GM12878 (cell line): ENCODE measurements at regions of chr11 and their contacts with region 1.

Region 1: GRCh38 chr11:2428322-2428795 is 16.0 kb downstream of the TRPM5 start:
- DNase-seq: no peak
- ATAC-seq: peak; percentile 92
- H3K4me3 ChIP-seq: no peak overlapping the region
- H3K27ac ChIP-seq: no peak overlapping the region
- H3K4me1 ChIP-seq: no peaks in the 10 kb centered on the region
- H3K27me3 ChIP-seq: no peaks in the 10 kb centered on the region
- CTCF ChIP-seq: peak; percentile 81 to 92 (median 87)
- EP300 ChIP-seq: no peak
- POLR2A ChIP-seq: no peak
- RAD21 ChIP-seq: peak; percentile 98

Region 2: DNA sequence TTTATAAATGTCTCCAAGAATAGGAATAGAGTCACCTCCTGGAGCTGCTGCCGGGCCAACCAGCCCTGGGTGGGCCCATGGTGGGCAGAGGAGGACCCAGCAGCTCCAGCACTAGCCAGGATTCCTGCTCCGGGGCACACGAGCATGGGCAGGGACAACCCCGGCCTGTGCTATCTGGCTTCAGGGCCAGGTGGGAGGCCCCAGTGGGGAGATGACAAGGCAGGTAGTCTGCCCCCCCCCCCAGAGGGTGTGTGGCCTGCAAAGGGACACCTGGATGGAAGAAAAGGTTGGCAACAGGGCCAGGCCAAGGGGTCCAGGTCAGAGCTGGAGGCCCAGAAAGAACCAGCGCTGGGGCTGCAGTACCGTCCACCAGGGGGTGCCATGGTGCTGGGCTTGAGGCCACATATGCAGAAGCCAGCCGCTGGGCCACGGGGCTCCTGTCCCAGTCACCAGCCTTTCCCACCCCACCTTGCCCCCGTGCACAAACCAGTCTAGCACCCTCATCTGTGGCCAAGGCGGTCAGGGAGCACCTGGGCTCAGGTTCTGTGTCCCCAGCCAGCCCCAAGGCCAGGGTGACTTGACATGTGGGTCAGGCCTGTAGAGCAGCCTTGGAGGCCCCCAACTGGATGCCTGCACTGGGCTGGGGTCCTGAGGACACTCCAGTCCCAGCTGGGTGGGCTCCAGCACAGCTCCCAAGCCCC is 123.1 kb before region 1 on chr11:
- CTCF ChIA-PET with region 1: interaction called, 271 read pairs
- POLR2A ChIA-PET with region 1: no interaction called
- RAD21 ChIA-PET with region 1: interaction called, 187 read pairs
- SMC1A ChIA-PET with region 1: no interaction called
- in situ Hi-C with region 1: no loop called
- intact Hi-C with region 1: no loop called
- DNase-seq: peak; percentile 4
- ATAC-seq: peak; percentile 92
- H3K4me3 ChIP-seq: no peak overlapping the region
- H3K27ac ChIP-seq: no peak overlapping the region
- H3K4me1 ChIP-seq: no peaks in the 10 kb centered on the region
- H3K27me3 ChIP-seq: no peaks in the 10 kb centered on the region; a peak in 1 of 4 replicates
- CTCF ChIP-seq: peak; percentile 76 to 93 (median 84)
- EP300 ChIP-seq: no peak
- POLR2A ChIP-seq: no peak
- RAD21 ChIP-seq: peak; percentile 87

Region 3: DNA sequence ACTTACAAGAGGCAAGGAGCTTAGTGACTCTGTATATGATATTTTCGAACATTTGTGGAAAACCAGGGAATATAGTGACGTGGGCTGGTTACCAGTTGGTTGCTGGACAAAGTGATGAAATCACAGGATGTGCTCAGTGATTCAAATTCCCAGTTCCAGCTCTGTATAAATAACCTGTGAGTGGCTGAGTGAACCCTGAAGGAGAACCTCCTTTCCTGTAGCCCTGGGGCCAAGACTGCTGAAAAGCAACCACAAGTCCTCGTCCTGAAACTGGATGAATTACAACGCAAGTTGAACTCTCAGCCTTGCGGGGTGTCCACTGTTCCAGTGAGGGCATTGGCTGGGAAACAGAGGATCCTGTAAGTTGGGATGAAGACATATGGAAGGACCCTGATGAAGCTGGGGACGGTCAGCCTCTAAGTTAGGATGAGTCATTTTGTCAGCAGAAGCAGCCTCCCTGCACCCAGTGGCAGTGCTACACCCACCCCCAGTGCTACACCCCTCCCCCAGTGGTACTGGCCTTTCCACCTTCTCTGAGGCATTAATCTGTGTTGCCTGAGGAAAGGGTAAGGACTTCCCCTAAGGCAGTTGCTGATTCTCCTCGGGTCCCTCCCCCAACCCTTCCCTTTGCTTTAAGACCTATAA is 73.2 kb before region 1 on chr11:
- CTCF ChIA-PET with region 1: no interaction called
- POLR2A ChIA-PET with region 1: no interaction called
- RAD21 ChIA-PET with region 1: no interaction called
- SMC1A ChIA-PET with region 1: no interaction called
- in situ Hi-C with region 1: no loop called
- intact Hi-C with region 1: no loop called
- DNase-seq: no peak
- ATAC-seq: no peak
- H3K4me3 ChIP-seq: no peak overlapping the region
- H3K27ac ChIP-seq: no peak overlapping the region
- H3K4me1 ChIP-seq: no peaks in the 10 kb centered on the region
- H3K27me3 ChIP-seq: no peaks in the 10 kb centered on the region; a peak in 2 of 4 replicates
- CTCF ChIP-seq: no peak
- EP300 ChIP-seq: no peak
- POLR2A ChIP-seq: no peak
- RAD21 ChIP-seq: no peak

Region 4: GRCh38 chr11:2877474-2877873 is 449.1 kb after region 1 on chr11:
- CTCF ChIA-PET with region 1: no interaction called
- POLR2A ChIA-PET with region 1: no interaction called
- RAD21 ChIA-PET with region 1: no interaction called
- SMC1A ChIA-PET with region 1: no interaction called
- in situ Hi-C with region 1: loop called (anchors 5 kb)
- intact Hi-C with region 1: no loop called
- DNase-seq: no peak
- ATAC-seq: no peak
- H3K4me3 ChIP-seq: no peak overlapping the region
- H3K27ac ChIP-seq: no peak overlapping the region
- H3K4me1 ChIP-seq: no peaks in the 10 kb centered on the region
- H3K27me3 ChIP-seq: peaks cover under 1 to 1% of the 10 kb centered on the region in 2 experiments; a peak in 2 of 4 replicates
- CTCF ChIP-seq: no peak
- EP300 ChIP-seq: no peak
- POLR2A ChIP-seq: no peak
- RAD21 ChIP-seq: no peak

Region 5: DNA sequence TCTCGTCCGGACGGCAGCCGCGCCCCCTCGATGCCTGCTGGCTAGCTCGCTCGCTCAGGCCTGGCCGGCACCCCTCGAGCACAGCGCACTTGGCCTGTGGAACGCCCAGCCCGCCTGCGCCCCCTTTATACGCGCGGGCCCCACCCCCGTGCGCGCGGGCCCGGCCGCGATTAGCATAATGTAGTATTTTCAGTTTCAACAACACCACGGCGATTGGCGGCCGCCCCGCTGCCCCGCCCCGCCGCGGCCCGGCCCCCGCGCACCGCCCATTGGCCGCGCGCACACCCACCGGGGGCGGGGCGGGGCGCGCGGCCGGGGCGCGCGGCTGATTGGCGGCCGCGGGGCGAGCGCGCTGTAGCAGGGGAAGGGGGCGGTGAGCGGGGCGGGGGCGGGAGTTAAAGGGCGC is 457.3 kb after region 1 on chr11 and contains the start of gene CDKN1C:
- CTCF ChIA-PET with region 1: interaction called, 3 read pairs
- POLR2A ChIA-PET with region 1: no interaction called
- RAD21 ChIA-PET with region 1: no interaction called
- SMC1A ChIA-PET with region 1: interaction called, 3 read pairs
- in situ Hi-C with region 1: no loop called
- intact Hi-C with region 1: loop called (anchors 1 kb)
- DNase-seq: no peak
- ATAC-seq: peak; percentile 88
- H3K4me3 ChIP-seq: peak within 1 kb of the TSS; percentile 59; the same call in 1 of the 2 replicates
- H3K27ac ChIP-seq: no peak within 1 kb of the TSS
- H3K4me1 ChIP-seq: peaks cover 5% of the 10 kb centered on the region
- H3K27me3 ChIP-seq: peaks cover 9 to 10% of the 10 kb centered on the region in 2 experiments; a peak in 3 of 4 replicates
- CTCF ChIP-seq: no peak
- EP300 ChIP-seq: no peak
- POLR2A ChIP-seq: peak; percentile 66
- RAD21 ChIP-seq: no peak
- polyA plus RNA-seq, gene CDKN1C: not detected